PC-3 (cell line): ENCODE measurements at regions of chr13 and their contacts with region 1.

Region 1: DNA sequence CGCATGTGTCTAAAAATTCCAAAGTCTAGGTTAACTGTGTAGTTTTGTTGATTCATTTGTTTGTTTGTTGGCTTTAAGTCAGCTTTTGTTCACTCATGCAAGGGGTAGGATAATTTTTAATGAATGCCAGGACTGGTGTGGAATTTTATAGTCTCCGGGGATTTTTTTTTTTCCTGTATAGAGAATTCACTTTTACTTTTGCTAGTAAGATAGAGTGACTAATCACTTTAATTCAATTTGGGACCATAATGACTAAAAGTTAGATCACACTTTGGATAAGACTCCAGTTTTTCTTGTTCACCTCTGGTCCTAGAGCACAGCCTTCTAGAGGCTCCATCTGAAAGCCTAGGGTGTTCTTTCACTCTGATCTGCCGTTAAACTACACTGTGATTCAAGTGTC is 1690.0 kb downstream of the PCDH9 start:
- DNase-seq: peak; percentile 79
- ATAC-seq: peak; percentile 99
- H3K4me3 ChIP-seq: no peak overlapping the region
- H3K27ac ChIP-seq: peak overlapping the region; percentile 49; the same call in 1 of the 2 replicates
- H3K4me1 ChIP-seq: peaks cover 12% of the 10 kb centered on the region
- H3K27me3 ChIP-seq: no peaks in the 10 kb centered on the region
- CTCF ChIP-seq: no peak

Region 2: DNA sequence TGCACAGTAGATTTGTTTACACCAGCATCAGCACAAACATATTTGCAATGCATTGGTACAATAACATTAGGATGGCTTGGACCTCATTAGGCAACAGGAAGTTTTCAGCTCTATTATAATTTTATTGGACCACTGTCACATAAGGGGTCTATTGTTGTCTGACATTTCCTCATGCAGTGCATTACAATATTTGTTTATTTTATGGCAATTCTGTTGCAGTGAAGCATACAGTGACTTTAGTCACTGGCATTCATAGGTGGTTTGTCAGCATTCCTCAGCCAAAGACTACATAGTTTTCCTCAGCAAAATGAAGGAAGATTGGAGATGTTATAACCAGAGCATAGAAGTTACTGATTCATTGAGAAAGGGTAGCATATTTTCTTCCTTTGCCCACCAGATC is 42.9 kb before region 1 on chr13:
- CTCF ChIA-PET with region 1: no interaction called
- POLR2A ChIA-PET with region 1: no interaction called
- intact Hi-C with region 1: loop called (anchors 2 kb)
- DNase-seq: peak; percentile 86
- ATAC-seq: peak; percentile 93
- H3K4me3 ChIP-seq: no peak overlapping the region
- H3K27ac ChIP-seq: peak overlapping the region; percentile 77
- H3K4me1 ChIP-seq: peaks cover 13% of the 10 kb centered on the region
- H3K27me3 ChIP-seq: no peaks in the 10 kb centered on the region
- CTCF ChIP-seq: no peak